Ovary (tissue), 10 donors: ENCODE measurements at regions of chr9 and their contacts with region 1.

Region 1: GRCh38 chr9:94213511-94214124 is 45.5 kb upstream of the ZNF169 start:
- DNase-seq: peak; percentile 54 to 76 (median 64)
- H3K4me3 ChIP-seq: no peak overlapping the region
- H3K27ac ChIP-seq: no peak overlapping the region
- H3K4me1 ChIP-seq: no peaks in the 10 kb centered on the region
- H3K27me3 ChIP-seq: no peaks in the 10 kb centered on the region
- CTCF ChIP-seq: peak; percentile 66 to 86 (median 83)
- EP300 ChIP-seq: no peak
- POLR2A ChIP-seq: no peak

Region 2: GRCh38 chr9:93682232-93682968 is 531.2 kb before region 1 on chr9:
- intact Hi-C with region 1: loop called in 2 of 4 experiments (anchors 5 to 10 kb)
- DNase-seq: peak in 4 of 5 donors; percentile 19 to 67 (median 52)
- H3K4me3 ChIP-seq: no peak overlapping the region
- H3K27ac ChIP-seq: no peak overlapping the region
- H3K4me1 ChIP-seq: no peaks in the 10 kb centered on the region
- H3K27me3 ChIP-seq: no peaks in the 10 kb centered on the region
- CTCF ChIP-seq: peak; percentile 15 to 32 (median 24)
- EP300 ChIP-seq: no peak
- POLR2A ChIP-seq: no peak

Region 3: DNA sequence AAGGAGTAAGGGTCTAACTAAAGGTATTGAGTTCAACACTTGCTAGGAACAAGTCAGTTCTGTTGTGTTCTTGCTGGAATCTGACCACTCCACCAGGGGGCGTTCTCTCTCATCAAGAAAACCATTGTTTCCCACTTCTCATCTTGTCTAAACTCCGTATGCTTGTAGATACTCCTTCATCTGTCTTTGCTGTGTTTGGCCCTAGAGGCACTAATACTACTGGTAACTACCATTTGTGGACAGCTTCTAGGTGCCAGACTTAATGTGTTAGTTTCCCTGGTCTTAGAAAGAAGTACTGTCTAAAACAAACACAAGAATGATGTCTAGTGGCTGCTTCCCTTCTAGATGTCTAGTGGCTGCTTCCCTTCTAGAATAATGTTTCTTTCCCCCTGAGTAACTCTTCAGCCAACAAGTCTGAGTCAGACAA is 148.1 kb before region 1 on chr9:
- intact Hi-C with region 1: loop called (anchors 2 to 10 kb)
- DNase-seq: peak; percentile 53 to 82 (median 67)
- H3K4me3 ChIP-seq: no peak overlapping the region
- H3K27ac ChIP-seq: no peak overlapping the region
- H3K4me1 ChIP-seq: no peaks in the 10 kb centered on the region
- H3K27me3 ChIP-seq: no peaks in the 10 kb centered on the region
- CTCF ChIP-seq: peak; percentile 66 to 72 (median 71)
- EP300 ChIP-seq: no peak
- POLR2A ChIP-seq: no peak

Region 4: GRCh38 chr9:94144394-94144793 is 69.2 kb before region 1 on chr9:
- intact Hi-C with region 1: no loop called
- DNase-seq: no peak
- H3K4me3 ChIP-seq: no peak overlapping the region
- H3K27ac ChIP-seq: no peak overlapping the region
- H3K4me1 ChIP-seq: peaks cover 12% of the 10 kb centered on the region
- H3K27me3 ChIP-seq: no peaks in the 10 kb centered on the region
- CTCF ChIP-seq: no peak
- EP300 ChIP-seq: no peak
- POLR2A ChIP-seq: no peak

Region 5: GRCh38 chr9:94166237-94166963 is 47.2 kb before region 1 on chr9:
- intact Hi-C with region 1: no loop called
- DNase-seq: peak; percentile 98 to 99 (median 98)
- H3K4me3 ChIP-seq: peak overlapping the region; percentile 99
- H3K27ac ChIP-seq: peak overlapping the region; percentile 100
- H3K4me1 ChIP-seq: peaks cover 6% of the 10 kb centered on the region
- H3K27me3 ChIP-seq: no peaks in the 10 kb centered on the region
- CTCF ChIP-seq: peak in 2 of 3 donors; percentile 50 to 81
- EP300 ChIP-seq: peak; percentile 75
- POLR2A ChIP-seq: peak; percentile 99